MCF 10A (cell line): ENCODE measurements at regions of chr19 and their contacts with region 1.

Region 1: GRCh38 chr19:47284324-47284899 is 9.7 kb downstream of the INAFM1 start:
- DNase-seq: peak; percentile 68
- H3K4me3 Mint-ChIP-seq: no peak overlapping the region
- H3K27ac Mint-ChIP-seq: no peak overlapping the region
- H3K4me1 Mint-ChIP-seq: peaks cover 22% of the 10 kb centered on the region
- H3K27me3 Mint-ChIP-seq: no peaks in the 10 kb centered on the region
- CTCF ChIP-seq: peak; percentile 66

Region 2: GRCh38 chr19:47195434-47195833 is 89.0 kb before region 1 on chr19:
- CTCF ChIA-PET with region 1: no interaction called
- POLR2A ChIA-PET with region 1: no interaction called
- intact Hi-C with region 1: no loop called
- DNase-seq: no peak
- H3K4me3 Mint-ChIP-seq: no peak overlapping the region
- H3K27ac Mint-ChIP-seq: peak overlapping the region; percentile 9
- H3K4me1 Mint-ChIP-seq: no peaks in the 10 kb centered on the region
- H3K27me3 Mint-ChIP-seq: no peaks in the 10 kb centered on the region
- CTCF ChIP-seq: no peak

Region 3: DNA sequence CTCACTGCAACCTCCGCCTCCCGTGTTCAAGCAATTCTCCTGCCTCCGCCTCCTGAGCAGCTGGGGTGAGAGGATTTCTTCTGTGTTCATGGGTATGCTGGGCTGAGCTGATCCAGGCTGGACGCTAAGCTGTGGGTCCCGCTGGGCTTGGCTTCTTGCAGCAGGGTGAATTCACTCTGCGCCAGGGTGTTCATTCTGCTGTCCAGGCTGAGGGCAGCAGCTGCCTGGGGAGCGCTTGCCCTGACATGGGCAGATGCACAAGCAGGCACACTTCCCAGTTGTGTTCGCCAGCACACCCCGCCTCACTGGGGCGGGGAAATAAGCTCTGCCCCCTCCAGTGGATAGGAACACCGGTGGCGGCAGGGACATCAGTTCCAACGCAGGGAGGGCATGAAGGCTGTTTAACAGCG is 17.1 kb before region 1 on chr19:
- CTCF ChIA-PET with region 1: interaction called, 11 read pairs
- POLR2A ChIA-PET with region 1: interaction called, 3 read pairs
- intact Hi-C with region 1: no loop called
- DNase-seq: no peak
- H3K4me3 Mint-ChIP-seq: no peak overlapping the region
- H3K27ac Mint-ChIP-seq: no peak overlapping the region
- H3K4me1 Mint-ChIP-seq: peaks cover 4% of the 10 kb centered on the region
- H3K27me3 Mint-ChIP-seq: no peaks in the 10 kb centered on the region
- CTCF ChIP-seq: no peak

Region 4: GRCh38 chr19:47273313-47273977 is 11.0 kb before region 1 on chr19:
- CTCF ChIA-PET with region 1: interaction called, 11 read pairs
- POLR2A ChIA-PET with region 1: interaction called, 10 read pairs
- intact Hi-C with region 1: no loop called
- DNase-seq: peak; percentile 89
- H3K4me3 Mint-ChIP-seq: peak overlapping the region; percentile 79
- H3K27ac Mint-ChIP-seq: peak overlapping the region; percentile 77
- H3K4me1 Mint-ChIP-seq: peaks cover 16% of the 10 kb centered on the region
- H3K27me3 Mint-ChIP-seq: no peaks in the 10 kb centered on the region
- CTCF ChIP-seq: no peak

Region 5: DNA sequence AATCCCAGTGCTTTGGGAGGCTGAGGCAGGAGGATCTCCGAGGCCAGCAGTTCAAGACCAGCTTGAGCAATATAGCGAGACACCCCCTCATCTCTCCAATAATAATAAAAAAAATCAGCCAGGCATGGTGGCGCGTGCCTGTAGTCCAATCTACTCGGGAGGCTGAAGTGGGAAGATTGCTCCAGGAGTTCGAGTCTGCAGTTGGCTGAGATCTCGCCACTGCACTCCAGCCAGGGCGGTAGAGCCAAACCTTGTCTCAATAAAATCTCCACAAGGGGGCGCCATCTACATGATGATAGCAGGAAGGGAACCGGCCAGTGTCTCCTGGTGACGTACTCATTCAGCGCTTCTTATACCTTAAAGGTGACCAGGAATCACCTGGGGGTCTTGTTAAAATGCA is 11.6 kb after region 1 on chr19:
- CTCF ChIA-PET with region 1: interaction called, 26 read pairs
- POLR2A ChIA-PET with region 1: no interaction called
- intact Hi-C with region 1: no loop called
- DNase-seq: peak; percentile 93
- H3K4me3 Mint-ChIP-seq: no peak overlapping the region
- H3K27ac Mint-ChIP-seq: no peak overlapping the region
- H3K4me1 Mint-ChIP-seq: no peaks in the 10 kb centered on the region
- H3K27me3 Mint-ChIP-seq: no peaks in the 10 kb centered on the region
- CTCF ChIP-seq: peak; percentile 71

Region 6: GRCh38 chr19:47428177-47428894 is 143.9 kb after region 1 on chr19:
- CTCF ChIA-PET with region 1: interaction called, 17 read pairs
- POLR2A ChIA-PET with region 1: no interaction called
- intact Hi-C with region 1: loop called (anchors 1 kb)
- DNase-seq: peak; percentile 98
- H3K4me3 Mint-ChIP-seq: no peak overlapping the region
- H3K27ac Mint-ChIP-seq: no peak overlapping the region
- H3K4me1 Mint-ChIP-seq: no peaks in the 10 kb centered on the region
- H3K27me3 Mint-ChIP-seq: peaks cover 7% of the 10 kb centered on the region
- CTCF ChIP-seq: no peak